CD8-positive, alpha-beta T cell (primary cell): ENCODE measurements at regions of chr1 and their contacts with region 1.

Region 1: GRCh38 chr1:150486964-150487762 is at the start of gene TARS2:
- DNase-seq: peak; percentile 87 to 97 (median 94)
- ATAC-seq: peak; percentile 100
- H3K4me3 ChIP-seq: peak within 1 kb of the TSS; percentile 86 to 97
- H3K4me3 Mint-ChIP-seq: peak within 1 kb of the TSS; percentile 100
- H3K27ac ChIP-seq: peak within 1 kb of the TSS; percentile 81
- H3K27ac Mint-ChIP-seq: peak within 1 kb of the TSS; percentile 99
- H3K4me1 ChIP-seq: peaks cover 9% of the 10 kb centered on the region
- H3K4me1 Mint-ChIP-seq: peaks cover 18% of the 10 kb centered on the region
- H3K27me3 ChIP-seq: no peaks in the 10 kb centered on the region
- H3K27me3 Mint-ChIP-seq: no peaks in the 10 kb centered on the region
- CTCF ChIP-seq: no peak
- total RNA-seq, gene TARS2: 19.4 to 28.8 TPM

Region 2: DNA sequence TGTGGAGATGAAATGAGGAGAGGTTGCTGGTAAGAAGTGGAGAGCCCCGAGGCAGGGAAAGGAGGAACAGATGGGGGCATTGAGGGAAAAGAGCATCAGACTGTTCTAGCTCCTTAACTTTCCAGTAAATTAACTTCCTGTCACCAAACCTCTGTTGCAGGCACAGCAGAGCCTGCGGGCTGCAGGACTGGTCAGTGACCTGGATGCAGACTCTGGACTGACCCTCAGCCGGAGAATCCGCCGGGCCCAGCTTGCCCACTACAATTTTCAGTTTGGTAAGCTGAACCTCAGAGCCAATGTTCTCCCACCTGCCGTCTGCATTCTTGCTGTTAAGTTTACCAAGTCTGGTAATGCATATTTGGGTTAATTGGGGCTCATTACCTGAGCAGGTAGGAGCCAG is 18.3 kb after region 1 on chr1:
- CTCF ChIA-PET with region 1: no interaction called
- POLR2A ChIA-PET with region 1: no interaction called
- intact Hi-C with region 1: no loop called
- DNase-seq: no peak
- ATAC-seq: no peak
- H3K4me3 ChIP-seq: no peak overlapping the region
- H3K4me3 Mint-ChIP-seq: no peak overlapping the region
- H3K27ac ChIP-seq: no peak overlapping the region
- H3K27ac Mint-ChIP-seq: peak overlapping the region; percentile 41
- H3K4me1 ChIP-seq: no peaks in the 10 kb centered on the region
- H3K4me1 Mint-ChIP-seq: no peaks in the 10 kb centered on the region
- H3K27me3 ChIP-seq: no peaks in the 10 kb centered on the region
- H3K27me3 Mint-ChIP-seq: no peaks in the 10 kb centered on the region
- CTCF ChIP-seq: no peak

Region 3: GRCh38 chr1:150515328-150516048 is 28.3 kb after region 1 on chr1 and contains the start of gene FALEC:
- CTCF ChIA-PET with region 1: interaction called, 4 read pairs
- POLR2A ChIA-PET with region 1: interaction called, 12 read pairs
- intact Hi-C with region 1: loop called (anchors 1 to 2 kb)
- DNase-seq: peak; percentile 76 to 95 (median 89)
- ATAC-seq: peak; percentile 98
- H3K4me3 ChIP-seq: peak within 1 kb of the TSS; percentile 68 to 89
- H3K4me3 Mint-ChIP-seq: peak within 1 kb of the TSS; percentile 89
- H3K27ac ChIP-seq: peak within 1 kb of the TSS; percentile 13 to 63
- H3K27ac Mint-ChIP-seq: peak within 1 kb of the TSS; percentile 79
- H3K4me1 ChIP-seq: peaks cover 3% of the 10 kb centered on the region
- H3K4me1 Mint-ChIP-seq: peaks cover 16% of the 10 kb centered on the region
- H3K27me3 ChIP-seq: no peaks in the 10 kb centered on the region
- H3K27me3 Mint-ChIP-seq: no peaks in the 10 kb centered on the region
- CTCF ChIP-seq: no peak
- total RNA-seq, gene FALEC: not detected

Region 4: DNA sequence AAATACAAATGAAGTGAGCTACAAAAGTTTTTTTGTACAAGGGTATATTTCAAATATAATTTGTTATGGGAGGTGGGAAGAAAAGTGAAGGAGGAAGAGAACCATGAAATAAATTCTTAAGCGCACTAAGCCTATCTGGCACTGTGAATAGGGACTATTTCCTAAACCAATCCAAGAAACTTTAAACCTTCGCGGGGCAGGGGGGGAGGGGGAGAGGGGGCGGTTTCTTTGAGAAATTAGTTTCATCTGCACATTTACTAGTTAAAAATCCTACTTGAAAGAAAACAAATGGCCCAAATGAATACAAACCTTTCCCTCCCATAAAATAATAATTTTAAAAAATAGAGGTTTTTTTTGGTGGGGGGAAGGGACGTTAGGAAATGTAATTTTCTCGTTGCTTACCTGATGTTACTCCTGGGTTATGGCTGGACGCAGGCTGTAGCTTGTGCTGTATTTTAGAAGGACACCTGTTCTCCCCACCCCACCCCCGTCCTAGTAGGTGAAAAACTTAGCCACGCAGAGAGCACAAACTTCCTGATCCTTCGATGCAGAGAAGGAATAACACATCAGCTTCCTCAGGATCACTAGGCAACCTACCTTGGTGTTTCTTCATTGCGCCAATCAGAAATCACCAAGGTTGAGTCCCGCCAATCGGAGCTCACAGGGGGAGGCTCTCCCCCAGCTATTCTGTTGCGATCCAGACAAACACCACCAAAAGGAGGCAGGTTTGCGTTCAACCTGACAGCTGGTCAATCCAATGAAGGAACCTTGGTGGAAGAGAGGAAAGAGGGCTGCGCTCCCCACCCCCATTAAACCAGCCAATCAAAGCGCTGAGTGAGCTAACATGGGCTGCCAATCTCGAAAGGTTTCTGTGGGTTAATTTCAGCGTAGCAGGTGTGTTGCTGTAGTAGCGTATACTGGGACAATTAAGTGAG is 209.7 kb after region 1 on chr1 and contains the start of gene GOLPH3L:
- CTCF ChIA-PET with region 1: no interaction called
- POLR2A ChIA-PET with region 1: no interaction called
- intact Hi-C with region 1: loop called in 1 of 2 experiments (anchors 2 kb)
- DNase-seq: peak; percentile 76 to 97 (median 88)
- ATAC-seq: peak; percentile 98
- H3K4me3 ChIP-seq: peak within 1 kb of the TSS; percentile 81 to 88
- H3K4me3 Mint-ChIP-seq: peak within 1 kb of the TSS; percentile 98
- H3K27ac ChIP-seq: peak within 1 kb of the TSS; percentile 70 to 81
- H3K27ac Mint-ChIP-seq: peak within 1 kb of the TSS; percentile 92
- H3K4me1 ChIP-seq: peaks cover 7% of the 10 kb centered on the region
- H3K4me1 Mint-ChIP-seq: peaks cover 38% of the 10 kb centered on the region
- H3K27me3 ChIP-seq: no peaks in the 10 kb centered on the region
- H3K27me3 Mint-ChIP-seq: peaks cover 2% of the 10 kb centered on the region
- CTCF ChIP-seq: no peak
- total RNA-seq, gene GOLPH3L: 1.6 to 1.8 TPM

Region 5: DNA sequence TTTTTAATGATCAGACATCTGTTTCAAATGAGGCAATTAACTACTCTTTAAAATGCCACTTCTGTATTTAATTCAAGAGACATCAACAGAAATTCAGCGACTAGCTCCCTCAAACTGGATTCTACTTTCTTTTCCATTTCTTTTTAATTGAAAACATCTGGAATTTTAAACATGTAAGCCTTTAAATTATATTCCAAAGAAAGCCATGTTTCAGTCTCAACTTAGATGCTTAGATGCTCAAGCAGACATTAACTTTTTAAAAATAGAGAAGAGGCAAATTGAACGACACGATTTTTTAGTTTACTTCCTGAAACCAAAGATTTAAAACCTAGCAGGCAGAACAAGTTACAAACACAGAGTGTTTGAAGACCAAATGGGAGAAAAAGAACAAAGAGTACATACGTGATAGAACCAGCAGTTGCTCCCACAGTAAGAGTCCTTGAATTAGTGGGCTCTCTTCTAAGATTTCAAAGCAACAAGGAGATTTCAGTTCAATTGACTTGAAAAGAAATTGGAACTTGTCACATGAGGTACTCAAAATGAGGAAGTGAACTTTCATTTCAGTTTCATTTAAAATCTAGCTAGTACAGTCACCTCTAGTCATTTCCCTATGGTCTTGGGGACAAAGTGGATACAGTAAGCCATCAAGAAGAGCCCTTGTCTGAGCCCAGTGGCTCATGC is 278.3 kb after region 1 on chr1 and contains the start of gene CTSS:
- CTCF ChIA-PET with region 1: no interaction called
- POLR2A ChIA-PET with region 1: no interaction called
- intact Hi-C with region 1: loop called in 1 of 2 experiments (anchors 10 kb)
- DNase-seq: peak in 2 of 9 experiments; percentile 39 to 66
- ATAC-seq: peak; percentile 64
- H3K4me3 ChIP-seq: peak within 1 kb of the TSS; percentile 47 to 69
- H3K4me3 Mint-ChIP-seq: peak within 1 kb of the TSS; percentile 94
- H3K27ac ChIP-seq: peak within 1 kb of the TSS; percentile 67 to 75
- H3K27ac Mint-ChIP-seq: peak within 1 kb of the TSS; percentile 95
- H3K4me1 ChIP-seq: peaks cover 25% of the 10 kb centered on the region
- H3K4me1 Mint-ChIP-seq: peaks cover 42% of the 10 kb centered on the region
- H3K27me3 ChIP-seq: no peaks in the 10 kb centered on the region
- H3K27me3 Mint-ChIP-seq: no peaks in the 10 kb centered on the region
- CTCF ChIP-seq: no peak
- total RNA-seq, gene CTSS: 58.3 to 63.0 TPM

Region 6: GRCh38 chr1:151336556-151336955 is 849.4 kb after region 1 on chr1:
- CTCF ChIA-PET with region 1: no interaction called
- POLR2A ChIA-PET with region 1: no interaction called
- intact Hi-C with region 1: no loop called
- DNase-seq: no peak
- ATAC-seq: no peak
- H3K4me3 ChIP-seq: no peak overlapping the region
- H3K4me3 Mint-ChIP-seq: no peak overlapping the region
- H3K27ac ChIP-seq: no peak overlapping the region
- H3K27ac Mint-ChIP-seq: no peak overlapping the region
- H3K4me1 ChIP-seq: no peaks in the 10 kb centered on the region
- H3K4me1 Mint-ChIP-seq: peaks cover 9% of the 10 kb centered on the region
- H3K27me3 ChIP-seq: no peaks in the 10 kb centered on the region
- H3K27me3 Mint-ChIP-seq: no peaks in the 10 kb centered on the region
- CTCF ChIP-seq: no peak